ENCODE measurements at regions of chr12 and their contacts with region 1.

Region 1: DNA sequence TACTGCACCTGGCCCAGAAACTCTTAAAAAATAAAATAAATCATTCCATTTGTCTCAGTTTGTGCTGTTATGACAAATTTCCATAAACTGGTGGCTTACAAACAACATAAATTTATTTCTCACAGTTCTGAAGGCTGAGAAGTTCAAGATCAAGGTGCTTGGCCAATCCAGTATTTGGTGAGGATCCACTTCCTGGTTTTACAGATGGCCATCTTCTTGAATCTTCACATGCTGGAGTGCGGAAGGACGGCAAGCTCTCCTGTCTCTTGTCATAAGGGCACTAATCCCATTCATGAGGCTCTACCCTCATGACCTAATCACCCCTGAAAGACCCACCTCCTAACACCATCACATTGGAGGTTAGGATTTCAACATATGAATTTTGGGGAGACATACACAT is 29.9 kb upstream of the MYBPC1 start:
- DNase-seq: no peak
- ATAC-seq: no peak

Region 2: DNA sequence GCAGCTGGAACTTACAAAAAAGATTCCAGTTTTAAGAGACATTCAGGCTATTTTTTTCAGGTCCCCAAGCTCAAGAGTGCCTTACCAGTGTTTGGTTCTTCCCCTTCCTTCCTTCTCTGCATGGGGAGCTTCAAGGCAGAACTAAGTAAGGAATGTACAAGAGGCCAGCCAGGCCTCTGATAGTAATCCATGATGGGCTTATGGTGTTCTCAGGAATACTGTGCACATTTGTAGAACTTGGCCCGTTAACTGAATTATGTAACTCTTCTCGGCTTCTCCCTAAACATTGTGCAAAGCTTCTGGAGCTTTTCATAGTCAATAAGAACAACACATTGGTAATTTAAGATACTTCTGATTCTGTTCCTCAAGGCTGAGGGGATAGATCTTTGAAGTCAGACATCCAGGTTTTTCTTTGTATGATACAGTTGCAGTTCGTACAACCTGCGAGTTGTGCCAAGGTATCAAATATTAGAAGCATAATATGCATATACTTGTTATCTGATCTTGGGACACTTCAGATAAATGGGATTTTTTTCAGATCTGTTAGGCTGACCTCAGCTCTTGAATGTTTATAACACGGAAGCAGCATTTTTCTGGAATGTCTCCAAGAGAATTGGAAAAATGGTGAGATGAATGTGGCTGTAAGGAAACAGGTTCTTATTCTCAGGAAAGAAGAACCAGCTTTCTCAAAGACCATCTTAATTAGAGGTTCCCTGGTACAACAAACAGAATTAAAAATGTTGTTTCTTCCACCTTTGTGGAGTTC is 621.7 kb before region 1 on chr12:
- intact Hi-C with region 1: no loop called
- DNase-seq: no peak
- ATAC-seq: no peak

Region 3: GRCh38 chr12:101064721-101065120 is 500.2 kb before region 1 on chr12:
- intact Hi-C with region 1: no loop called
- DNase-seq: no peak
- ATAC-seq: no peak

Region 4: DNA sequence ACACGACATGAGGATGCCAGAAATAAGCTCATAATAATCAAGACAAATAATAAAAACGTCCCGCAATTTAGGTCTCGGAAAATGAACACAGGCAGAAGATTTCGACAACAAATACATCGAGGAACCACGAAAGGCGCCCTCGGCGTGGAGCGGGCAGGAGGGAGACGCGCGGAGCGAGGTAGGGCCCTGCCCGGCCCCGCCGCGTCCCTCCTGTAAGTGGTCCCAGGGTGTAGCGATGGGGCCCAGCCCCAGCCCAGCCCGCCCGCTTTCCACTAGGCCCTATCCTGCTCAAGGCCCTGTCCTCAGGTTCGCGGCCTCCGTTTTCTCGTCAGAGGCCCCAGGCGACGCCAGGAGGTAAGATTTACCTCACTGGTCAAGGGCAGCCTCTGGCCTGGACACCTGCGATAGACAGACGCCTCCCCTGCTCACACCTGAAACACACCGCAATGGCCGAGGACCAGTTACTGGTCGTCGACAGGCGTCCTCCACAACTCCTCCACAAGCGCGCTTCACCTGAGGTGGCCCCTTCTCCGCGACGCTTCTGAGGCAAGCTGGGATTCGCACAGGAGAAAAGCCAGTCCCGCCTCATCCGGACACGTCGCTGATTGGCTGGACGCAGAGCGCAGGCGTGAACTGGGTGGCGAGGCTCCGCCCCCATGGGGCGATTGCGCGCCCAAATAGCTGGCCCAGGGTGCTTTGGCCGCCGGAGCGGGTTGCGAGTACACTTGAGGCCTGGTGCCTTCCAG is 174.2 kb after region 1 on chr12 and contains the start of gene SYCP3:
- intact Hi-C with region 1: no loop called
- DNase-seq: no peak
- ATAC-seq: no peak
- total RNA-seq, gene SYCP3: 0.15 to 0.20 TPM

Region 5: GRCh38 chr12:101759396-101760047 is 194.6 kb after region 1 on chr12:
- intact Hi-C with region 1: loop called in 1 of 2 experiments (anchors 10 kb)
- DNase-seq: no peak
- ATAC-seq: peak; percentile 67

Measured in left colon (tissue), 2 donors.